Activated CD4-positive, alpha-beta memory T cell treated with anti-CD3 and anti-CD28 coated beads, Interleukin-2, amount 10 ng/mL, durations not matched to agents 7 days and 5 days (primary cell): ENCODE measurements at regions of chrX and their contacts with region 1.

Region 1: DNA sequence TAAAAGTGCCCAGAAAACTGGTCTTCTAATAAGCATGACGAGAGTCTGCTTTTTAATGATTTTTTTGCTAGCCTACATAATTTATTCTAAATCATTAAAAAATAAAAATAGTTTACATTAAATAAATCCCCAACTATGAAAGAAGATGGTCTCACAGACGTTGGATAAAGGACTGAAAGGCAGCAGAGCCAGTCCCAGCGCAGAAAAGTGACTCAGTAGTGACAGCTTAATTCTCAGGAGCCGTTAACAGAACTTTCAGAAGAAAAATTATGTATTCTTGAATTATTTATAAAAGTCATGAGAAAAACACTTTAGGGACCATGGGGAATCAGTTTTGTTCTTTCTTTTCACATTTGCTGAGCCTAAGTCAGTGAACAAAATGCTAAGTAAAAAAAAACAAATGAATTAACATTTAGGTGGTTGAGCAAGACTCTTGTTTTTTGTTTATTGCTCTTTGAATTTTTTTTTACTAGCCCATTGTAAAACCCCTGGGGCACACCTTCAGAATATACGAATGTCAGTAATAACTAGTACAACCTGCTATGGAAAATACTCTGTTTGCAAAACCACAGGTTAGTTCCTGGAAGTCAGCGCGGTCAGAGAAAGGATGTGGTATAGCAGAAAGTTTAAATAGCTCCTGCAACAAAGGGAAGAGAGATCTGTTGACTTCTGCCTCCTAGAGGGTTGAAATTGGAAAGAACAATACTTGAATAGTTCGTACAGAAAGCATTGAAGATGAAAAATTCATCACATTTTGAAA is 50.4 kb upstream of the CCDC160 start:
- DNase-seq: peak; percentile 80
- H3K4me3 Mint-ChIP-seq: peak overlapping the region; percentile 71
- H3K27ac Mint-ChIP-seq: peak overlapping the region; percentile 80
- H3K4me1 Mint-ChIP-seq: peaks cover 38% of the 10 kb centered on the region
- H3K27me3 Mint-ChIP-seq: no peaks in the 10 kb centered on the region

Region 2: DNA sequence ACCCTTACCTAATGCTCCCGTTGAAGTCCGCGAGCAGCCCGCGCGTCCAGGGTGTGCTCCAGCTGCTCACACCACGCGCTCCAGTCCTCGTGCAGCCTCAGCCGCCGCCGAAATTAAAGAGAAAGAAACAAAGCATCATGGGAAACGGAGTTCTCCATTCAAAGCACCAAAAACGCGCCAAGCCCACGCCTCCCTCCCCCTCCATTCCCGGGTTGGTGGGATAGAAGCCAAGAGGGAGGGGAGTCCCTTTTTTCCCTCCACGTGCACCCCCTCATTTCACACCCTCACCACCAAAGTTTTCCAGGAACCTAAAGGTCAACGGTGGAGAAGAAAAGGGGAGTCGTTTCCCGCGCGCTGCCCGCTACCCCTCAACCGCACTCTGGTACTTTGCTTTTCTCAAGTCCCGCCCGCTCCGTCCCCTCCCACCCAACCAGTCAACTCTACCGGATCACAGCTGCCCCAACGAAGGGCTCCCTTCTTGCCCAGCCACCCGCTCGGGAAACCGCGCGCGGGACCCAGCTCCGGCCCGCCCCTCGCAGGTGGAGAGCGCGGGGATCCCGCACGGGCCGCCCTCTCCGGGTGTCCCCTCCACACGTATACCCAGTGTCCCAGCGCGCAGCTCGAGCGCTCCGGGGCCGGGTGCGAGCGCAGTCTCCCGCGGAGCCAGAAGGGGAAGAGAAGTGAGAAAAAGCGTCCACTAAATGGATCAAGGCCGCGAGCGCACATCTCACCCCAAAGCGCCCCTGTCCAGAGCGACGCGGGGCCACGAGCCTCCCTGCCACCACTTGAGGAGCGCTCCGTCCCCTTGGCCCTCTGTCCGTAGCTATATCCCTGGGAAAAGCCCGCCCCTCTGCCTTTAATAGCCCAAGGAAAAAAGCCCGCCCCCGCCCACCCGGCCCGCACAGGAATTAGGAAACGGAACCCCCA is 14.6 kb before region 1 on chrX:
- CTCF ChIA-PET with region 1: interaction called, 7 read pairs
- POLR2A ChIA-PET with region 1: interaction called, 113 read pairs
- DNase-seq: peak; percentile 51
- H3K4me3 Mint-ChIP-seq: peak overlapping the region; percentile 91
- H3K27ac Mint-ChIP-seq: peak overlapping the region; percentile 92
- H3K4me1 Mint-ChIP-seq: peaks cover 32% of the 10 kb centered on the region
- H3K27me3 Mint-ChIP-seq: peaks cover 6% of the 10 kb centered on the region

Region 3: DNA sequence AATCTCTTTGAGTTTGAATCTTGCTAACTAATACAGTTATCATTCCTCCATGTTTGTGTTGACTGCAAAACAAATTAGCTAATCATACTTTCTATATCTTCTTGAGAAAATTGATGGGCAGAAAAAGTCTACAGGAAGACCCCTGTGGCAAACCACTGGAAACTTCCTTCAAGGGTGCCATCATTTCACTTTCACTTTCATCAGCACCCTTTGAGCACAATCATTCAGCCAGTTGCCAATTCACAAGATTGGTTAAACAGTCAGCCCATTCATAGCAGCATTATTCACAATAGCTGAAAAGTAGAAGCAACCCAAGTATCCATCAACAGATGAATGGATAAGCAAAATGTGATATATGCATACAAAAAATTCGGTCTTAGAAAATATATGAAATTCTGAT is 152.0 kb after region 1 on chrX:
- CTCF ChIA-PET with region 1: no interaction called
- POLR2A ChIA-PET with region 1: no interaction called
- DNase-seq: peak; percentile 15
- H3K4me3 Mint-ChIP-seq: no peak overlapping the region
- H3K27ac Mint-ChIP-seq: no peak overlapping the region
- H3K4me1 Mint-ChIP-seq: peaks cover 9% of the 10 kb centered on the region
- H3K27me3 Mint-ChIP-seq: peaks cover 1% of the 10 kb centered on the region